GM13976 (cell line): ENCODE measurements at regions of chr14 and their contacts with region 1.

Region 1: GRCh38 chr14:100645192-100645990 is 58.2 kb upstream of the BEGAIN start:
- DNase-seq: peak; percentile 87
- CTCF ChIP-seq: peak; percentile 72

Region 2: DNA sequence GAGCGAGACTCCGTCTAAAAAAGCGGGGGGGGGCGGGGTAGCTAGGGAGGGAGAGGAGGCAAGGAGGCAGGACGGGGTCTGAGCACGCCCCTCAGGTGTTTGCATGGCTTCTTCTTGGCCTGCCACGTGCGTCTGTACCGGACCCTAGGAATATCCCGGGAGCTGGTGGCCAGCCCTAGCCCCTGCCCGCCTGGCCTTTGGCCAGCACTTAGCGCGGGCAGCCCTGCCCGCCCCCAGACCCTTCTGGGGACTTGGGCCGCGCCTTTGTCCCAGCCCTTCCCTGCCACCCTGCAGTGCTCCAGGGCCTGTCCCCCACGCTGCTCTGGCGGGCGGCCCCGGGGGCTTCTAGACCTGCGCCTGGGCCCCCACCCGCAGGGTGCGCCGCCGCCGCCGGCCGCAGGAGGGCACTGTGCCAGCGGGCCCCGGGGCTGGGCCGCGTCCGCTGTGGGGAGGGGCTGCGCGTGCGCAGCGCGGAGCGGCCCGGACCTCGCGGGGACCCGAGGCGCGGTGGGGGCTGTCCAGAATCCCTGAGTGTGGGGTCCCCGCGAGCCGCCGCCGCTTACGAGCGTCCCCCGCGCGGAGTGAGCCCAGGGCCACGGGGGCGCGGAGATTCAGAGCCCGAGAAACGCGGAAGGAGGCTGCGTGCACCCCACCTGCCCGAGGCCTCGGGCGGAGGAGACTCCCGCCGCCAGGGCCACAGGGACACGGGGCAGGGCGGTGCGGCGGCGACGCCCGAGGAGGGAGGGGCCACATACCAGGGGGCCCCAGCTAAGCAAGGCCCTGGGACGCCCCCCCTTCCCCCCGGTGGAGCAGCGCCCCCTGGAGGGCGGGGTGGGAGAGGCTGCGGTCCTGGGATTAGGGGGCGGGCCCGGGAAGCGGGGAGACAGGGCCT is 360.1 kb before region 1 on chr14:
- in situ Hi-C with region 1: loop called (anchors 25 kb)
- DNase-seq: peak; percentile 97
- CTCF ChIP-seq: peak; percentile 95

Region 3: DNA sequence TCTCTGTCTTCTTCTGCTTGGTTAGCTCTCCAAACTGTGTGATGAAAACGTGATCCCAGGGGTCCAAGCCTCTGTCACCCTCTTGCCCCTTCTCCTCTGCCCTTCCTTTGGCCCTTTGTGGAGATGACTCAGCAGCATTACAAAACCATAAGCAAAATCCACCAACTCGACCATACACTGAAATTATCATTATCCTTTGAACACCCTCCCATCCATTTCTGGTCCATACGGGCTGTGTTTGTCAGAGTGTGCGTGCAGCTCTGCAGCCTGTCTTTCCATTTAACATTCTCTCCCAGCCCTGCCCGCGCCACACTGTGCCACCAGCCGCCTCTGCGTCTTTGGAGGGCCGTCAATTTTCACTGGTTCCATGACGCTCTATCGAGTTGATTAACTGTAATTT is 253.0 kb before region 1 on chr14:
- in situ Hi-C with region 1: loop called (anchors 10 kb)
- DNase-seq: no peak
- CTCF ChIP-seq: no peak